ENCODE measurements at regions of chr10 and their contacts with region 1.

Region 1: DNA sequence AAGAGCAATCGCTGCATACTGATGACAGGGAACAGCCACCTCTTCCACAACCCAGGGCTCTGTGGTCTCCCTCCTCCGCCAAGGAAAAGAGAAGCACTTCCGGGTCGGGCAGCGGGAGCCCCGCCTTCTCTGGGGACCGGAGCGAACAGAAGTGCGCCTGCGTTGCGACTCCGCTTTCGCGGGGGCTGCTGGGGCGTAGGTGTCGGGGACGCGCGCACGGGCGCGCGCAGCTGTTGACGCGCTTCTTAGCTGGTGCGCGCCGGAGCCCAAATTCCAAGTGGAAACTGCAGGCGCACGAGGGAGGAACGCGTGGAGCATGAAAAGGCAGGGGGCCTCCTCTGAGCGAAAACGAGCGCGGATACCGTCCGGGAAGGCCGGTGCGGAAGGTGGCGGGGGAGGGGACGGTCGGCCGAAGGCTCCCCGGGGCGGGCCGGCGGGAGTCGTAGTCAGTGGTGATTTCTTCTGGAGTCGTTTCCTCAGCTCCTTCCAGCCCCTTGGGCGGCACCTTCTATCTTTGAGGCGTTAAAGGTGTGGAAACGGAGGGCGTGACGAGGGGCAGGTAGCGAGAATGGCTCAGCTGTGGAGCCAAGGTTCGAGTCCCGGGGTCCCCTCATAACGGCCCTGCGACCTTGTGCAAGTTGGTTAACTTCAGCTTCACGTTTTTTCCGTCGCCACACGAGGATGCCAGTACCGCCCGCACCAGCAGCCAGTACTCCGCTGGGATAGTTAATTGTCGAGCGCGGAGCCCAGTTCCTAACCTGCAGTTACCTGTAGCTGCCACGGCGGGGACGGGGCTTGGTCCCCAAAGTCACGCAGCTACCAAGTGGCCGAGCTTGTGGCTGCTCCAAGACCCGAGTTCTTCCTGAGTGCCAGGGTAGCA is at the starts of genes COX15 and CUTC:
- DNase-seq: peak; percentile 86 to 97
- H3K4me3 ChIP-seq: peak within 1 kb of the TSS; percentile 91 to 97 (median 93)
- H3K27ac ChIP-seq: peak within 1 kb of the TSS; percentile 85
- H3K4me1 ChIP-seq: no peaks in the 10 kb centered on the region
- H3K27me3 ChIP-seq: no peaks in the 10 kb centered on the region
- CTCF ChIP-seq: peak; percentile 42 to 60 (median 47); a peak in 3 of 4 replicates
- EP300 ChIP-seq: no peak
- POLR2A ChIP-seq: peak; percentile 86 to 93
- RAD21 ChIP-seq: peak; percentile 10 to 27; a peak in 2 of 4 replicates
- total RNA-seq, gene COX15: 35.9 and 36.6 TPM in 2 replicates
- total RNA-seq, gene CUTC: 25.6 and 27.2 TPM in 2 replicates

Region 2: DNA sequence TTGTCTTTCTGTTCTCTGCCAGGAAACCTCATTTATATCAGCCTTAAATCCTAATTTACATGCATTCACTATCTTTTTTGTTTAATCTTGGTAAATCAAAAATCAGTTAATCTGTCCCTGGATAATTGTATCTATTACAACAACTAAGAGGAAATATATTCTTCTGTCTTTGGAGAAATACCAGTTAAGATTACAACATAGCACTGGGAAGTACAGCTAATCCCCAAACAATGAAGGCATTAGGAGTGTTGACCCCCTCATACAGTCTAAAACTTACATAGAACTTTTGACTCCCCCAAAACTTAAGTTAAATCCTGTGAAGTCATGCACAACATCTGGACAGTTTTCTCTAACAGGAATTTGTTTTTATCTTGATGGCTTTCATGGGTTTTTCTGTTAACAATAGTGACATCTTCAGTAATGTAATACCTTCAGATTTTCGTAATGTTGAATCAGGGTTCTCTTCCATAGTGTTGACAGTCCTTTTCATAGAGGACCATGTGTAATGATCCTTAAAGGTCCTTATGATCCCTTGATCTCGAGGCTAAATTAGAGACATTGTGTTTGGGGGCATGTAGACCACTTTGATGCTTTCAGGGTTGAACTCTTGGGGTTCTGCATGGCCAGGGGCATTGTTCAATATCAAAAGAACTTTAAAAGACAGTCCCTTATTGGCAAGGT is 26.1 kb after region 1 on chr10:
- CTCF ChIA-PET with region 1: interaction called, 3 read pairs
- POLR2A ChIA-PET with region 1: interaction called, 11 read pairs
- DNase-seq: no peak
- H3K4me3 ChIP-seq: no peak overlapping the region
- H3K27ac ChIP-seq: no peak overlapping the region
- H3K4me1 ChIP-seq: no peaks in the 10 kb centered on the region
- H3K27me3 ChIP-seq: no peaks in the 10 kb centered on the region
- CTCF ChIP-seq: no peak
- EP300 ChIP-seq: no peak
- POLR2A ChIP-seq: no peak
- RAD21 ChIP-seq: no peak

Measured in H1 (cell line).